ENCODE measurements at regions of chr19 and their contacts with region 1.

Region 1: GRCh38 chr19:3429581-3430080 is 50.7 kb downstream of the SMIM24 start:
- DNase-seq: peak; percentile 34
- H3K4me3 ChIP-seq: no peak overlapping the region
- H3K27ac ChIP-seq: peak overlapping the region; percentile 11
- H3K27me3 ChIP-seq: no peaks in the 10 kb centered on the region
- CTCF ChIP-seq: peak; percentile 95

Region 2: GRCh38 chr19:3330047-3330446 is 99.6 kb before region 1 on chr19:
- CTCF ChIA-PET with region 1: interaction called, 31 read pairs
- POLR2A ChIA-PET with region 1: no interaction called
- DNase-seq: no peak
- H3K4me3 ChIP-seq: no peak overlapping the region
- H3K27ac ChIP-seq: no peak overlapping the region
- H3K27me3 ChIP-seq: peaks cover 2% of the 10 kb centered on the region
- CTCF ChIP-seq: no peak

Region 3: DNA sequence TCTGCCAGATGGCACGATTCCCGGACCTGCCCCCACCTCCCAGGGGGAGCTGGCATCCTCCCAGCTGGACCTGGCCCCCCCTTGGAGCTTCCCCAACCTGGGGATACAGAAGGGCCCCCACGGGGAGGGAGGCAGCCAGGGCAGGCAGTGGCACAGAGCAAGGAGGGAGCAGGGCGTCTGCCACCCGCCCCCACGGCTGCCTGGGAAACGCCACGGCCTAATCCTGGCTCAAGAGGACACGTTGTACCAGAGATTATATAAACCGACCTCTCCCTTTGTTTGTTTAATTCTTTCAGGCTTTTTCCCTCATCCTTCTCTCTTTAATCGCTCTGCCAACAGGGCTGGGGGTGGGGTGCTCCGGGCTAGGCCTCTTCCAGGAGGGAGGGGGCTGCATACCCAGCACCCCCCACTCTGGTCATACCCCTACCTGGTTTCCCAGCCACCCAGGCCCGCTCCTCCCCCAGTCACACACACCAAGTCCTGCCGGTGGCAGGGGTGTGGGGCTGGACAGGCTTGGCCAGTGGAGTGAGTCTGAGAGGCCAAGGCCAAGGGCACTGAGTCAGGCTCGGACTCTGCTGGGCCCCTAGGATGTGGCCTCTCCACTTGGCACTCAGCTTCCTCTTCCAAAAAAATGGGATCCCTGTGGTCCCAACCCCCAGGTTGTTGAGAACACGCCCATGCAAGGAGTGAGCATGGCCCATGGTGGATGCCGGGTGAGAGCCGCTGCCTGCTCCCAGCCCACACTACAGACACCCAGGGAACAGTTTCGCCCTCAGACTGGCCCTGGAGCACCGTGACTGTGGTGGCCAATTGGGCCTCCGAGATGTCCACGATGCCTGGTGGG is 92.7 kb before region 1 on chr19:
- CTCF ChIA-PET with region 1: interaction called, 11 read pairs
- POLR2A ChIA-PET with region 1: no interaction called
- DNase-seq: peak; percentile 18
- H3K4me3 ChIP-seq: no peak overlapping the region
- H3K27ac ChIP-seq: peak overlapping the region; percentile 70
- H3K27me3 ChIP-seq: no peaks in the 10 kb centered on the region
- CTCF ChIP-seq: no peak

Region 4: GRCh38 chr19:3383121-3383722 is 46.4 kb before region 1 on chr19:
- CTCF ChIA-PET with region 1: interaction called, 19 read pairs
- POLR2A ChIA-PET with region 1: no interaction called
- DNase-seq: no peak
- H3K4me3 ChIP-seq: no peak overlapping the region
- H3K27ac ChIP-seq: peak overlapping the region; percentile 21
- H3K27me3 ChIP-seq: no peaks in the 10 kb centered on the region
- CTCF ChIP-seq: no peak

Region 5: DNA sequence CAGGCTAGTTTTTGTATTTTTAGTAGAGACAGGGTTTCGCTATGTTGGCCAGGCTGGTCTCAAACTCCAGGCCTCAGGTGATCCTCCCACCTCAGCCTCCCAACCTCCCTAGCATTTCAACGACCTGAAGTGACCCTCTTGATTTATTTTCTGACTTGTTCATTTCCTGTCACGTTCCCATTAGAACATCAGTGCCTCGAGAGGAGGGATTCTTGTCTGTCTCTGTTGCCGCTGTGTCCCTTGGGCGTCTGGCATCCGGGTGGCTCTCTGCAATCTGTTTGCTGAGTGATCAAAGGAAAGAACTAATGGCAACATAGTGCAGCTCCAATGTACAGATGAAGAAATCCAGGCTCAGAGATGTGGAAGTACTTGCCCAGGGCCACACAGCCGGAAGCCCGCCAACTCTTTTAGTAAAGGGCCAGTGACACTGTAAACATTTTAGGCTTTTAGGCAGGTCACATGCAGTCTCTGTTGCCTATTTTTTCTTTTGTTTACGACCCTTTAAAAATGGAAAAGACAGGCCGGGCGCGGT is 15.8 kb before region 1 on chr19:
- CTCF ChIA-PET with region 1: interaction called, 32 read pairs
- POLR2A ChIA-PET with region 1: interaction called, 3 read pairs
- DNase-seq: no peak
- H3K4me3 ChIP-seq: no peak overlapping the region
- H3K27ac ChIP-seq: no peak overlapping the region
- H3K27me3 ChIP-seq: no peaks in the 10 kb centered on the region
- CTCF ChIP-seq: no peak